T-cell (primary cell): ENCODE measurements at regions of chr7 and their contacts with region 1.

Region 1: GRCh38 chr7:26200444-26201246 is at the start of gene HNRNPA2B1:
- DNase-seq: peak; percentile 96 to 100 (median 98)
- ATAC-seq: peak; percentile 68 to 76 (median 71)
- H3K4me3 ChIP-seq: peak within 1 kb of the TSS; percentile 95 to 97
- H3K4me3 Mint-ChIP-seq: peak within 1 kb of the TSS; percentile 96 to 100 (median 100)
- H3K27ac ChIP-seq: peak within 1 kb of the TSS; percentile 99
- H3K27ac Mint-ChIP-seq: peak within 1 kb of the TSS; percentile 99 to 100
- H3K4me1 ChIP-seq: peaks cover 19 to 56% of the 10 kb centered on the region in 2 experiments
- H3K4me1 Mint-ChIP-seq: peaks cover 50 to 74% (median 51%) of the 10 kb centered on the region in 3 donors
- H3K27me3 ChIP-seq: no peaks in the 10 kb centered on the region
- H3K27me3 Mint-ChIP-seq: peaks cover 0 to 2% of the 10 kb centered on the region in 2 donors
- total RNA-seq, gene HNRNPA2B1: 388 to 478 (median 411) TPM

Region 2: GRCh38 chr7:26078437-26079336 is 122.0 kb before region 1 on chr7:
- CTCF ChIA-PET with region 1: interaction called, 10 to 14 read pairs
- POLR2A ChIA-PET with region 1: interaction called, 4 to 7 read pairs
- DNase-seq: peak; percentile 69 to 89 (median 82)
- ATAC-seq: peak; percentile 99 to 100 (median 100)
- H3K4me3 ChIP-seq: no peak overlapping the region
- H3K4me3 Mint-ChIP-seq: peak overlapping the region; percentile 9 to 38 (median 31)
- H3K27ac ChIP-seq: no peak overlapping the region
- H3K27ac Mint-ChIP-seq: no peak overlapping the region
- H3K4me1 ChIP-seq: peaks cover 0 to 5% of the 10 kb centered on the region in 2 experiments
- H3K4me1 Mint-ChIP-seq: peaks cover 7 to 11% (median 9%) of the 10 kb centered on the region in 3 donors
- H3K27me3 ChIP-seq: peaks cover 0 to 25% of the 10 kb centered on the region in 2 experiments
- H3K27me3 Mint-ChIP-seq: peaks cover 18 to 31% of the 10 kb centered on the region in 2 donors

Region 3: GRCh38 chr7:26090927-26091519 is 109.6 kb before region 1 on chr7:
- CTCF ChIA-PET with region 1: interaction called, 9 to 50 read pairs
- POLR2A ChIA-PET with region 1: interaction called in 1 of 2 experiments, 10 read pairs
- DNase-seq: peak in 2 of 35 experiments; percentile 9 to 69
- ATAC-seq: peak; percentile 57 to 75 (median 68)
- H3K4me3 ChIP-seq: no peak overlapping the region
- H3K4me3 Mint-ChIP-seq: peak overlapping the region in 1 of 3 donors; percentile 6
- H3K27ac ChIP-seq: no peak overlapping the region
- H3K27ac Mint-ChIP-seq: peak overlapping the region in 1 of 2 donors; percentile 62
- H3K4me1 ChIP-seq: no peaks in the 10 kb centered on the region
- H3K4me1 Mint-ChIP-seq: peaks cover 16 to 26% (median 24%) of the 10 kb centered on the region in 3 donors
- H3K27me3 ChIP-seq: no peaks in the 10 kb centered on the region
- H3K27me3 Mint-ChIP-seq: no peaks in the 10 kb centered on the region

Region 4: GRCh38 chr7:26151953-26152781 is 48.5 kb before region 1 on chr7 and contains the start of gene NFE2L3:
- CTCF ChIA-PET with region 1: interaction called, 6 to 10 read pairs
- POLR2A ChIA-PET with region 1: interaction called, 5 to 10 read pairs
- DNase-seq: peak; percentile 57 to 90 (median 71)
- ATAC-seq: peak; percentile 78 to 86 (median 86)
- H3K4me3 ChIP-seq: peak within 1 kb of the TSS; percentile 50 to 58
- H3K4me3 Mint-ChIP-seq: peak within 1 kb of the TSS; percentile 80 to 93 (median 87)
- H3K27ac ChIP-seq: peak within 1 kb of the TSS; percentile 43
- H3K27ac Mint-ChIP-seq: peak within 1 kb of the TSS; percentile 91 to 93
- H3K4me1 ChIP-seq: peaks cover 22 to 52% of the 10 kb centered on the region in 2 experiments
- H3K4me1 Mint-ChIP-seq: peaks cover 54 to 55% (median 54%) of the 10 kb centered on the region in 3 donors
- H3K27me3 ChIP-seq: no peaks in the 10 kb centered on the region
- H3K27me3 Mint-ChIP-seq: no peaks in the 10 kb centered on the region
- total RNA-seq, gene NFE2L3: 1.8 to 6.2 (median 5.1) TPM

Region 5: DNA sequence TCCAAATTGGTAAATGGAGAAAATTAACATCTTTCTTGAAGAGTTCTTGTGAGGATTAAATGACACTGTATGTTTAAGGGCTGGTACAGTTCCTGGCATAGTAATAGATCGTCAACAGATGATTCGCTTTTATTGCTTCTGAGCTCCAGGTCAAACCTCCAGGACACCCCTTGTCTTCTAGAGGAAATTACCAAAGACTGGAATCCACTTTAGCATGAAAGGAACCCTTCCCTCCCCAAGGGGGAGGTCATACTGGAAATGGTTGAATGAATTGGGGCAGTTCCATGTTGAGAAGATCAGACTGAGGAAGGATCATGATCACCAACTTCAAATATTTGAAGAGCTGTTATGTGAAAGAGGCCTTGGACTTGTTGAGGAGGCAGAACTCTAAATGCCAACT is 39.8 kb before region 1 on chr7:
- CTCF ChIA-PET with region 1: interaction called, 6 to 7 read pairs
- POLR2A ChIA-PET with region 1: interaction called, 7 to 10 read pairs
- DNase-seq: no peak
- ATAC-seq: no peak
- H3K4me3 ChIP-seq: no peak overlapping the region
- H3K4me3 Mint-ChIP-seq: no peak overlapping the region
- H3K27ac ChIP-seq: no peak overlapping the region
- H3K27ac Mint-ChIP-seq: no peak overlapping the region
- H3K4me1 ChIP-seq: peaks cover 3 to 24% of the 10 kb centered on the region in 2 experiments
- H3K4me1 Mint-ChIP-seq: peaks cover 41 to 55% (median 45%) of the 10 kb centered on the region in 3 donors
- H3K27me3 ChIP-seq: no peaks in the 10 kb centered on the region
- H3K27me3 Mint-ChIP-seq: no peaks in the 10 kb centered on the region

Region 6: DNA sequence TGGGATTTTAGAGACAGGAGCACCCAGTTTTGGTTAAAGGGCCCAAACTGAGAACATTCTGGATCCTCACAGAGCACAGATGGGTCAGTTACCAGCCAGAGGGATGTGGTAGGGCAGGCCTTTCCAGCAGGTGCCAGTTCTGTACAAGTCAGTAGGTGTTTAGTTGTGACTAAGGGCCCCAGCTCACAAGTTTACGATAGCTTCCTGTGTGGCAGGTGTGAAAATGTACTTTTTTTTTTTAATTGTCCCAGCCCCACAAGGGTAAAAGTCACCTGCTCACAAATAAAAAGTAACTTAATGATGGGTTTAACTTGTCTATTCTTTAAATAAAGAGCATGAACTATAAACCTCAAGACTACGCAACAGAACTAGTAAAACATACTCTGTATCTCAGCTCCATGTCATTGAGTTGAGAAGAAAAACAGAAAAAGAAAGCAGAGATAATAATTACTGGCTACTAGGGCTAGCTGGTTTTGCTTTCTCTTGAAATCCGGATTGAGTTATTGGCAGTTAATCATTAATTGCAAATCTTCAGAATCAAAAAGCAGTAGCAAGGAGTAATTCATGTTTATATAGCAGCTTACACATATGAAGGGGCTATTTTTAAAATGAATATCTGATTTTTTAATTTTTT is 33.2 kb before region 1 on chr7:
- CTCF ChIA-PET with region 1: interaction called in 1 of 2 experiments, 3 read pairs
- POLR2A ChIA-PET with region 1: interaction called, 3 to 10 read pairs
- DNase-seq: peak in 16 of 35 experiments; percentile 16 to 70 (median 30)
- ATAC-seq: peak; percentile 45 to 86 (median 76)
- H3K4me3 ChIP-seq: no peak overlapping the region
- H3K4me3 Mint-ChIP-seq: no peak overlapping the region
- H3K27ac ChIP-seq: peak overlapping the region; percentile 77
- H3K27ac Mint-ChIP-seq: peak overlapping the region; percentile 62 to 79
- H3K4me1 ChIP-seq: peaks cover 5 to 14% of the 10 kb centered on the region in 2 experiments
- H3K4me1 Mint-ChIP-seq: peaks cover 13 to 29% (median 20%) of the 10 kb centered on the region in 3 donors
- H3K27me3 ChIP-seq: no peaks in the 10 kb centered on the region
- H3K27me3 Mint-ChIP-seq: no peaks in the 10 kb centered on the region

Region 7: DNA sequence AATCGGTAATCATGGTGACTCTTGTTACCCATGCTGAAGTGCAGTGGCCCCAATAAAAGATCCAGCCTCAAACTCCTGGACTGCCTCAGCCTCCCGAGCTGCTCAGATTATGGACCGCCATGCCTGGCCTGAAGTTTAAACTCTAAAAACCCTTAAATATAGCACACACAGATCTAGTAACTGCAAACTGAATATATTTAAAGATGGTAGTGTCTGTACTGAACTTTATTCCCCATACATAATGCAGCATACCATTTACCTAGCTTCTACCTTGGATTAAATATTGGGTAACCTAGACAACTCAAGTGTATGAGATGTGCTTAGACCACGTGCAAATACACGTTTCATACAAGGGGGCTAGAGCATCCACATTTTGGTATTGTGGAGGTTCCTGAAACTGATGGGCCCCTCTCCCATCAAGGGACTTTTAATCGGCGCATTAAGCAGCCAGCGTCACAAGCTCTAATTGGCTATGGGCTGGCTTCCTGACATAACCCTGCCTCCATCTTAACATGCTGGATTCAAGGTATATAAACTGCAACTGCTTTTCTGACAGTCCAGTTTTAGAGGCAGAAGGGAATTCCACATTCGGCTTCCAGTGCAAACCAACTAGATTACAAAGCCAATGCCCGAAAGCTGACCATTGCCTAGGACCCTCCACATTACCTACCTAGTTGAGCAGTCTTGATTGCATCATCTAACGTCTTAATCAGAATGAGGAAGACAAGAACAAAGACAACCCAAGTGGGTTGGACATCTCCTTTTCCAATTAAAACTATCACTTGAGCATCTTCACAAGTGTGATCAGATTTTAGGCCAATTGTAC is 13.1 kb before region 1 on chr7:
- CTCF ChIA-PET with region 1: interaction called, 8 to 38 read pairs
- POLR2A ChIA-PET with region 1: interaction called, 32 to 58 read pairs
- DNase-seq: peak in 1 of 35 experiments; percentile 29
- ATAC-seq: peak in 2 of 4 experiments; percentile 9 to 25
- H3K4me3 ChIP-seq: no peak overlapping the region
- H3K4me3 Mint-ChIP-seq: peak overlapping the region in 1 of 3 donors; percentile 20
- H3K27ac ChIP-seq: peak overlapping the region; percentile 28
- H3K27ac Mint-ChIP-seq: peak overlapping the region; percentile 56 to 69
- H3K4me1 ChIP-seq: peaks cover 17 to 22% of the 10 kb centered on the region in 2 experiments
- H3K4me1 Mint-ChIP-seq: peaks cover 84 to 89% (median 88%) of the 10 kb centered on the region in 3 donors
- H3K27me3 ChIP-seq: no peaks in the 10 kb centered on the region
- H3K27me3 Mint-ChIP-seq: no peaks in the 10 kb centered on the region